HCT116 (cell line): ENCODE measurements at regions of chr4 and their contacts with region 1.

Region 1: GRCh38 chr4:181030961-181031360 is 1212.2 kb upstream of the TENM3 start:
- DNase-seq: no peak
- ATAC-seq: peak; percentile 54; the same call in 1 of the 2 replicates
- H3K4me3 ChIP-seq: peak overlapping the region in 1 of 2 experiments; percentile 22; a peak in 1 of 4 replicates
- H3K27ac ChIP-seq: no peak overlapping the region
- H3K4me1 ChIP-seq: peaks cover 0 to 18% of the 10 kb centered on the region in 2 experiments; a peak in 2 of 4 replicates
- H3K27me3 ChIP-seq: no peaks in the 10 kb centered on the region
- CTCF ChIP-seq: no peak
- POLR2A ChIP-seq: no peak
- RAD21 ChIP-seq: no peak

Region 2: GRCh38 chr4:181018913-181019312 is 12.0 kb before region 1 on chr4:
- CTCF ChIA-PET with region 1: no interaction called
- POLR2A ChIA-PET with region 1: no interaction called
- RAD21 ChIA-PET with region 1: no interaction called
- intact Hi-C with region 1: no loop called
- DNase-seq: no peak
- ATAC-seq: no peak
- H3K4me3 ChIP-seq: no peak overlapping the region
- H3K27ac ChIP-seq: no peak overlapping the region
- H3K4me1 ChIP-seq: no peaks in the 10 kb centered on the region
- H3K27me3 ChIP-seq: no peaks in the 10 kb centered on the region
- CTCF ChIP-seq: no peak
- POLR2A ChIP-seq: no peak
- RAD21 ChIP-seq: no peak

Region 3: DNA sequence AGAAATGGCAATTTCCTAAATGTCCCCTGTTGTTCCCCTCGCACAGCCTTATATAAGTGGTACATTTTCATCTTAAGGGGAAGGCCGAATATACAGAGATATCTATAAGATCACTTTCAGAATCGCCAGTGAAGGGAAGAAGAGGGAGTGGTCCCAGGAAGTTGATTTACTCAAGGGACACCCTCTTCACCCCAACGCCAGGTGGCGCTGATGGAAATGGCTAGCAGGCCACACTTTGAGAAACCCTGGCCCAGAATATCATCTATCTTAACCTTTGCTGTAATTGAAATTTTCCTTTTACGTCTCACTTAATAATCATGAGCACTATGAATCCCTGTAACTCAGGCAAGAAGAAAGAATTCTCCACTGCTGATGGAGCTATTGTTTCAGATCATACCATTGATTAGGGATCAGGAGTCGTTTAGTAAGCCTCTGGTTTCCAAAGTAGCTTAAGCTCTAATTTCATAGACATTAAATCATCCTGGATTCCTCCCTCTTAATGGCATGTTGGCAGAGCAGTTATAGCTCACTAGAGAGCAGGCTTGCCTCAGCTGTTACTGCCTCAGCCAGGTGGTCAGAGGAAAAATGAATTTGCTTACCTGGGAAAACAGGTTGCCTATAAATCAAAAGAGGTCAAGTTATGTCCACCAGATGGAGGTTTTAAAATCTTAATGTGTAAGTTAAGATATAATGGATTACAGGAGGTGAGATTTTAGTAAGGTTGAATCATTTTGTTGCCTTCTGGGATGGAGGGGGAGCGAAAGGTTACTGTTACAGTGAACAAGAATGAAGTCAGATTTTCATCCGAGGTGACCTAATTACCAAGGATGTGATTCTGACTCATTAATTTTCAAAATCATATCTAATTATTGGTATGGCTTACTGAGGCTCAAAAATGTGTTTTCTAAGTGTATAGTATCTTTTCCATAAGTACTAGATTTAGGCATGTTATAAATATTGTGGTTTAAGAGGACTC is 271.1 kb after region 1 on chr4:
- CTCF ChIA-PET with region 1: no interaction called
- POLR2A ChIA-PET with region 1: no interaction called
- RAD21 ChIA-PET with region 1: no interaction called
- intact Hi-C with region 1: loop called (anchors 5 kb)
- DNase-seq: peak; percentile 41
- ATAC-seq: peak; percentile 92
- H3K4me3 ChIP-seq: no peak overlapping the region
- H3K27ac ChIP-seq: no peak overlapping the region
- H3K4me1 ChIP-seq: no peaks in the 10 kb centered on the region
- H3K27me3 ChIP-seq: no peaks in the 10 kb centered on the region
- CTCF ChIP-seq: peak; percentile 40 to 85 (median 75); a peak in 5 of 6 replicates
- POLR2A ChIP-seq: no peak
- RAD21 ChIP-seq: peak; percentile 58